Naive thymus-derived CD4-positive, alpha-beta T cell (primary cell): ENCODE measurements at regions of chr3 and their contacts with region 1.

Region 1: GRCh38 chr3:150681057-150681456 is 22.7 kb downstream of the ERICH6 start:
- DNase-seq: peak in 2 of 9 donors; percentile 4 to 17
- ATAC-seq: peak; percentile 58
- H3K4me3 ChIP-seq: no peak overlapping the region
- H3K4me3 Mint-ChIP-seq: peak overlapping the region in 2 of 10 donors; percentile 2 to 64
- H3K27ac ChIP-seq: no peak overlapping the region
- H3K27ac Mint-ChIP-seq: peak overlapping the region in 2 of 9 donors; percentile 1 to 69
- H3K4me1 ChIP-seq: peaks cover 0 to 4% of the 10 kb centered on the region in 2 donors
- H3K4me1 Mint-ChIP-seq: peaks cover 0 to 22% (median 7%) of the 10 kb centered on the region in 7 donors
- H3K27me3 ChIP-seq: no peaks in the 10 kb centered on the region
- H3K27me3 Mint-ChIP-seq: peaks cover 0 to 3% (median 2%) of the 10 kb centered on the region in 5 donors

Region 2: DNA sequence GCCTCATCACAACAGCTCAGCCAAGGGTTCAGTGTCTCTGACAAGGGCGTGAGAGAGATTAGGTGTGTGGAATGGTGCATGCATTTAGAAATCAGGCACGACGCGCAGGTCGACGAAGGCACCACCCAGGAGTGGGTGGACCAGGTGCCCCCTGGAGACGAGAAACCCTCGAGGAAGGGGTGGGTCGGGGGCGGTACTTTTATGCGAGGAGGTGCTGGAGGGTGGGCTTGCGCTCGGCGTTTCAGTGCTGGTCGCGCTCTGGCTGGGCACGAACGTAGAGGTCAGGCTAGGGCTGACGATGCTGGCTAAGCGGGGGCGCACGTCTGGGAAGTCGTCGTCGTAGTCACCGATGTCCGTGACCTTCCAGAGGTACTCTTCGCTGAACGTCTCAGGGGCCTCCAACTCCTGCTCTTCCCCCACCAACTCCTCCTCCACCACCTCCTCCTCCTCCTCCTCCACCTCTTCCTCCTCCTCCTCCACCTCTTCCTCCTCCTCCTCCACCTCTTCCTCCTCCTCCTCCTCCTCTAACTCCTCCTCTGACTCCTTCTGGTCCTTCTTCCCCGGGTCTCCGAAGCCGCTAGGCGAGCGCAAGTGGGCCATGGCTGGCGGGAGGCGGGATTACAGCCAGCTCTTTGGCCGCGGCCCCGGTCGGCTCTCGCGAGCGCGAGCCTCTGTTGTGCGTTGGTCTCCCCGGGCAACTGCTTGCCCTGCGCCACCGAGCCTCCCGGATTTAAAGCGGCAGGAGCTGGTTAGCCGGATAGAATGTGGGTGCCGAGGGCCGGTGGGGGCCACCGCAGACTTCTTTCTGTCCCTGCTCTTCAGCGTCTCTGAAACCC is 22.5 kb after region 1 on chr3 and contains the start of gene ERICH6:
- CTCF ChIA-PET with region 1: no interaction called
- POLR2A ChIA-PET with region 1: no interaction called
- intact Hi-C with region 1: loop called in 1 of 2 experiments (anchors 1 kb)
- DNase-seq: peak; percentile 59 to 83 (median 71)
- ATAC-seq: peak; percentile 93
- H3K4me3 ChIP-seq: peak within 1 kb of the TSS; percentile 94
- H3K4me3 Mint-ChIP-seq: peak within 1 kb of the TSS; percentile 82 to 98 (median 97)
- H3K27ac ChIP-seq: peak within 1 kb of the TSS; percentile 84
- H3K27ac Mint-ChIP-seq: peak within 1 kb of the TSS; percentile 93 to 100 (median 97)
- H3K4me1 ChIP-seq: peaks cover 4 to 5% of the 10 kb centered on the region in 2 donors
- H3K4me1 Mint-ChIP-seq: peaks cover 11 to 24% (median 20%) of the 10 kb centered on the region in 7 donors
- H3K27me3 ChIP-seq: no peaks in the 10 kb centered on the region
- H3K27me3 Mint-ChIP-seq: peaks cover 0 to 6% (median 0%) of the 10 kb centered on the region in 5 donors
- total RNA-seq, gene ERICH6: 0.24 to 1.4 (median 0.53) TPM

Region 3: DNA sequence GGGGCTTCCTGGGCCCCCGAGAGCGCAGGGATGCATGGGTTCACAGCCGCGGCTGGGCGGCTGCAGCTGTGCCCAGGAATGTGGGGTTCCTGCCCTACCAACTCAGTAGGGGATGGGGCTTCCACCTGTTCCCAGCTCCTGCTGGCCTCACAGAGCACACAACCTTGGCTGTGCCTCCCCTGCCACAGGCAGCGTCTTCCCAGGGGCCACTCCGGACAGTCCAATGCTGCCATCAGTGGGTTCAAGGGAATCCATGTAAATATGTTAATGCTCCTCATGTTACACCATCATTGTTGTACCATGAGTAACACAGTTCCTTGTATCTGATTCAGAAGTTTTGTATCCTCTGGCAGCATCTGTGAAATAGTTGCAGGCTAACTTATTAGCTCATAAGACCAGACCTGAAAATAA is 94.0 kb after region 1 on chr3:
- CTCF ChIA-PET with region 1: no interaction called
- POLR2A ChIA-PET with region 1: no interaction called
- intact Hi-C with region 1: no loop called
- DNase-seq: no peak
- ATAC-seq: no peak
- H3K4me3 ChIP-seq: no peak overlapping the region
- H3K4me3 Mint-ChIP-seq: no peak overlapping the region
- H3K27ac ChIP-seq: no peak overlapping the region
- H3K27ac Mint-ChIP-seq: no peak overlapping the region
- H3K4me1 ChIP-seq: no peaks in the 10 kb centered on the region
- H3K4me1 Mint-ChIP-seq: no peaks in the 10 kb centered on the region
- H3K27me3 ChIP-seq: no peaks in the 10 kb centered on the region
- H3K27me3 Mint-ChIP-seq: peaks cover 0 to 6% (median 0%) of the 10 kb centered on the region in 5 donors